ENCODE measurements at regions of chr17 and their contacts with region 1.

Region 1: GRCh38 chr17:49556223-49556971 is 19.3 kb upstream of the NXPH3 start:
- DNase-seq: peak; percentile 72 to 84 (median 75)
- H3K4me3 ChIP-seq: no peak overlapping the region
- H3K4me3 Mint-ChIP-seq: no peak overlapping the region
- H3K27ac ChIP-seq: no peak overlapping the region
- H3K27ac Mint-ChIP-seq: no peak overlapping the region
- H3K4me1 ChIP-seq: peaks cover 14% of the 10 kb centered on the region
- H3K4me1 Mint-ChIP-seq: peaks cover 5 to 10% (median 10%) of the 10 kb centered on the region in 3 donors
- H3K27me3 ChIP-seq: no peaks in the 10 kb centered on the region
- H3K27me3 Mint-ChIP-seq: peaks cover 1 to 9% of the 10 kb centered on the region in 2 donors

Region 2: DNA sequence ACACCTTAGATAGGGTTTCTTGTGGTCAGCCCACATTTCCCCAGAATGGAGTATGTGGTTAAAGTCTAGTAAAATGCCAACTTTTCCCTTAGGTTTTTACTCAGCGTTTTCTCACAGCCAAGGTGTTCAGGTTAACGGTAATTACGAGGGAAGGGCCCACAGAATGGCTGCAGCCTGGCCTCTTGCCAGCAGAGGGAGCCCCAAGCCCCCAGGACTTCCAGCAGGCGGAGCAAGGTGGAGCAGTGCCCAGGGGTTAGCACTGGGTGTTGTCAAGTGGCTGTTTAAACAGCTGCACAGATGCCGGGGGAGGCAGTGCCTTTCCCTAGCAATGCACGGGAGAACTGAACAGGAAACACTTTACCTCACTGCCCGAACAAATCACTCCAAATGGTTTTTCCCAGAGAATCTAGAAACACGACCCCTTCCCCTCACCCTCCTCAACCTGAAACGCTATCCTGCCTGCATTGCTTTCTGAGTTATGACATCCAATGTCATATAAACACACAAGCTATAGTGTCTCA is 148.4 kb before region 1 on chr17:
- CTCF ChIA-PET with region 1: interaction called, 85 read pairs
- POLR2A ChIA-PET with region 1: no interaction called
- DNase-seq: peak; percentile 72 to 87 (median 77)
- H3K4me3 ChIP-seq: no peak overlapping the region
- H3K4me3 Mint-ChIP-seq: peak overlapping the region in 4 of 7 donors; percentile 17 to 63 (median 25)
- H3K27ac ChIP-seq: no peak overlapping the region
- H3K27ac Mint-ChIP-seq: peak overlapping the region; percentile 46 to 86 (median 58)
- H3K4me1 ChIP-seq: peaks cover 29% of the 10 kb centered on the region
- H3K4me1 Mint-ChIP-seq: peaks cover 30 to 49% (median 38%) of the 10 kb centered on the region in 3 donors
- H3K27me3 ChIP-seq: no peaks in the 10 kb centered on the region
- H3K27me3 Mint-ChIP-seq: peaks cover 0 to 2% of the 10 kb centered on the region in 2 donors

Region 3: GRCh38 chr17:49434821-49435670 is 121.4 kb before region 1 on chr17:
- CTCF ChIA-PET with region 1: interaction called, 40 read pairs
- POLR2A ChIA-PET with region 1: no interaction called
- DNase-seq: peak in 3 of 5 donors; percentile 24 to 60 (median 27)
- H3K4me3 ChIP-seq: no peak overlapping the region
- H3K4me3 Mint-ChIP-seq: no peak overlapping the region
- H3K27ac ChIP-seq: no peak overlapping the region
- H3K27ac Mint-ChIP-seq: no peak overlapping the region
- H3K4me1 ChIP-seq: no peaks in the 10 kb centered on the region
- H3K4me1 Mint-ChIP-seq: no peaks in the 10 kb centered on the region
- H3K27me3 ChIP-seq: peaks cover 3% of the 10 kb centered on the region
- H3K27me3 Mint-ChIP-seq: peaks cover 30 to 46% of the 10 kb centered on the region in 2 donors

Region 4: DNA sequence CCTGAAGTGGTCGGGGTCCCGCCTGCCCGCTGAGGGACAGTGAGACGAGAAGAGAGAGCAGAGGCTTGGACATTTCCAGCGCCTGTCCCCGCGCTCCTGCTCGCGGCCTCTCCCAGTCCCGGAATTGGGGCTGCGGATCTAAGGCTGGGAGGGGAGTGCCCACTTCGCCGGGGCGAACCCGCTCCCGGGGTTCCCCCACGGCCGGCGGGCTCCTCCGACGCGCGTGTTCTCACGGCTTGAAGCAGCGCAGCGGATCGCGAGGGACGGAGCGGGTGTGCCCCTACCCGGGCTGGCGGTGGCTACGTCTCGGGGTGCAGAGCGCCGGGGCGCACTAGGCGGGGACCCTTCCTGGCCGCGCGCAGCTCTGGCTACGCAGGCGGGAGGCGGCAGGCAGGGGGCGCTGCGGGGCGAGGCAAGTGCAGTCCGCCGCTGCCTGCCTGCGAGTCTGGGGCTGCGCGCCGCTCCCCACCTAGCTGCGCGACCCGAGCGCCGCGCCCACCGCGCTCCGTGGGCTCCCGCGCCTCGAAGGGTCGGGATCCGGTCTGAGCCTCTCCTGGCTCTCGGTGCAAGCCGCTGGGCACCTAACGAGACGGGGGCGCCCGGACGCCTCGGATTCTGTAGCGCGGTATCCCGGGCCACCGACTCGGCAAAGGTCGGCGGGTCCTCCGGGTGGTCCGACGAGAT is 60.1 kb before region 1 on chr17:
- CTCF ChIA-PET with region 1: interaction called, 25 read pairs
- POLR2A ChIA-PET with region 1: no interaction called
- DNase-seq: peak; percentile 78 to 86 (median 81)
- H3K4me3 ChIP-seq: peak overlapping the region; percentile 55
- H3K4me3 Mint-ChIP-seq: peak overlapping the region; percentile 74 to 92 (median 80)
- H3K27ac ChIP-seq: no peak overlapping the region
- H3K27ac Mint-ChIP-seq: no peak overlapping the region
- H3K4me1 ChIP-seq: peaks cover 29% of the 10 kb centered on the region
- H3K4me1 Mint-ChIP-seq: peaks cover 19 to 37% (median 24%) of the 10 kb centered on the region in 3 donors
- H3K27me3 ChIP-seq: peaks cover 43% of the 10 kb centered on the region
- H3K27me3 Mint-ChIP-seq: peaks cover 34 to 37% of the 10 kb centered on the region in 2 donors

Region 5: DNA sequence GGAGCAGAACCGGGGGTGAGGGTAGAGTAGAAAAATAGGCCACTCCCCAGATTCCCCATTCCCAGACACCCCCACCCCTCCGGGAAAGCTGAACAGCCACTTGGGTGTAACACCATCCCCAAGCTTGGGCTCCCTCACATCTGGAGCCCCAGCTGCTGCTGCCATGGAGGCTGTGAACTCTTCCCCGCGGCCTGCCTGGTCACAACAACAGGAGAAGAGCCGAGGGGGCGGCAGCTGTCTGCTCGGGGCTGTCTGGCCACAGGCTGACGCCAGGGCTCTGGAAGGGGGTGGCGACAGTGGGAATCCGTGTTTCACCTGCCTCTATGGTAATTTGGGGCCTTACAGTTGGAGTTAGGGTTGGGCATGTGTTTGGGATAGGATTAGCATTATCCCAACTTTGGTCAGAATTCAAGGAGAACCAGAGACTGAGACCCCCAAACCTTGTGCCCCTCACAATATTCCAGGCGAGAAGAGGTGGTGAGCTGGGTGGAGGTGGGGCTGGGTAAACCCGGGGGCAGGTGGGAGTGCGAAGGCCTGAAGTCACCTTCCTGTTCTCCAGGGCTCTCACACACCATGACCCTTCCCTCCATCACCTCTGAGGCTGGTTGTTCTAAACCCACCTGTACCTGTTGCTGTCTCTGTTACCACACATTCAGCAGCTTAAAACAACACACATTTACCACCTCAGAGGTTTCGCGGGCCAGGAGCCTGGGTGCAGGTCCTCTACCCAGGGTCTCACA is 10.4 kb before region 1 on chr17:
- CTCF ChIA-PET with region 1: interaction called, 19 read pairs
- POLR2A ChIA-PET with region 1: no interaction called
- DNase-seq: no peak
- H3K4me3 ChIP-seq: no peak overlapping the region
- H3K4me3 Mint-ChIP-seq: no peak overlapping the region
- H3K27ac ChIP-seq: no peak overlapping the region
- H3K27ac Mint-ChIP-seq: no peak overlapping the region
- H3K4me1 ChIP-seq: no peaks in the 10 kb centered on the region
- H3K4me1 Mint-ChIP-seq: no peaks in the 10 kb centered on the region
- H3K27me3 ChIP-seq: no peaks in the 10 kb centered on the region
- H3K27me3 Mint-ChIP-seq: peaks cover 12 to 32% of the 10 kb centered on the region in 2 donors